Heart left ventricle (tissue), 16 donors: ENCODE measurements at regions of chr3 and their contacts with region 1.

Region 1: DNA sequence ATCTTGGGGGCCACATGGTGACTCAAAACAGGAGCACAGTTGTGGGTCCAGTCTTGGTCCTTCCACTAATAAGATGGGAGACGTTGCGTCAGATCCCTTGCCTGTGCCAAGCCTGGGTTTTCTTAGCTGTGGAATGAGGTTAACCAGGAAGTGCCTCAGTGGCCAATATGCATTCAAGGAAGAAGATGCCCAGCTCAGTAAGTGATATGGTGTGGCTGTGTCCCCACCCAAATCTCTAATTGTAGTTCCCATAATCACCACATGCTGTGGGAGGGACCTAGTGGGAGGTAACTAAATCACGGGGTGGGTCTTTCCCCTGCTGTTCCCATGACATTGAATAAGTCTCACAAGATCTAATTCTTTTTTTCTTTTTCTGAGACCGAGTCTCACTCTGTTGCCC is 6.4 kb downstream of the ALG1L2 start:
- DNase-seq: no peak
- ATAC-seq: no peak
- H3K4me3 ChIP-seq: no peak overlapping the region
- H3K27ac ChIP-seq: no peak overlapping the region
- H3K4me1 ChIP-seq: peaks cover 0 to under 1% (median 0%) of the 10 kb centered on the region in 12 donors
- H3K27me3 ChIP-seq: no peaks in the 10 kb centered on the region
- CTCF ChIP-seq: no peak
- POLR2A ChIP-seq: no peak

Region 2: DNA sequence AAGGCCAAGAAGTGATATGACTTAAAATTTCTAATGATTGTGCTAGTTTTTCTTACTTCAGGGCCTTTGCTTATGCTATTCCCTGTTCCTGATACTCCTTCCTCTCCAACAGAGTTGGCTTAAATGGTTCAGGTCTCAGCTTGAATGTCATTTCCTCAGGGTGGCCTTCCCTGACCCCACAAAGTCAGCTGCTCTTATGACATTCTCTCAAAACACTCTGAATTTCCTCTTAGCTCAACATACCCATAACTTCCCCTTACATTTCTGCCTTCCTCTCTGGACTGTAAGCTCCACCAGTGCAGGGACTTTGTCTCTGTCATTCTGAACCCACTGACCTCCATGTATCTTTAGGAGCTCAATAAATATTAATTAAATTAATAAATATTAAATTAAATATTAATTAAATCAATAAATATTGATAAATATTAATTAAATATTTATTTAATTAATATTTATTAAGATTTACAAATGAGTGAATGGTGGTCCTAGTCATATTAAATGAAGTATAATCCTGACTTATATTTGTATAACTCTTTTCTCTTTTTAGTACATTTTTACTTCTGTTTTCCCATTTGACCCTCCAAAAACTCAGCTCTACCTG is 176.7 kb before region 1 on chr3:
- intact Hi-C with region 1: no loop called
- DNase-seq: no peak
- ATAC-seq: peak in 3 of 4 donors; percentile 38 to 81 (median 78)
- H3K4me3 ChIP-seq: no peak overlapping the region
- H3K27ac ChIP-seq: peak overlapping the region in 1 of 12 donors; percentile 83
- H3K4me1 ChIP-seq: peaks cover 0 to 10% (median 0%) of the 10 kb centered on the region in 12 donors
- H3K27me3 ChIP-seq: no peaks in the 10 kb centered on the region
- CTCF ChIP-seq: no peak
- POLR2A ChIP-seq: no peak

Region 3: GRCh38 chr3:130044370-130044769 is 43.7 kb before region 1 on chr3:
- intact Hi-C with region 1: loop called in 1 of 10 experiments (anchors 5 kb)
- DNase-seq: no peak
- ATAC-seq: no peak
- H3K4me3 ChIP-seq: no peak overlapping the region
- H3K27ac ChIP-seq: no peak overlapping the region
- H3K4me1 ChIP-seq: no peaks in the 10 kb centered on the region
- H3K27me3 ChIP-seq: no peaks in the 10 kb centered on the region
- CTCF ChIP-seq: no peak
- POLR2A ChIP-seq: no peak

Region 4: GRCh38 chr3:130073582-130073981 is 14.5 kb before region 1 on chr3:
- intact Hi-C with region 1: no loop called
- DNase-seq: no peak
- ATAC-seq: no peak
- H3K4me3 ChIP-seq: no peak overlapping the region
- H3K27ac ChIP-seq: no peak overlapping the region
- H3K4me1 ChIP-seq: no peaks in the 10 kb centered on the region
- H3K27me3 ChIP-seq: no peaks in the 10 kb centered on the region
- CTCF ChIP-seq: no peak
- POLR2A ChIP-seq: no peak